Heart right ventricle (tissue), 16 donors: ENCODE measurements at regions of chr1 and their contacts with region 1.

Region 1: GRCh38 chr1:198756470-198756869 is 117.6 kb downstream of the PTPRC start:
- DNase-seq: no peak
- ATAC-seq: no peak
- H3K4me3 ChIP-seq: no peak overlapping the region
- H3K27ac ChIP-seq: no peak overlapping the region
- H3K4me1 ChIP-seq: peaks cover 0 to 7% (median 0%) of the 10 kb centered on the region in 9 donors
- H3K27me3 ChIP-seq: no peaks in the 10 kb centered on the region
- CTCF ChIP-seq: peak in 8 of 9 donors; percentile 29 to 65 (median 46)

Region 2: GRCh38 chr1:198793714-198794113 is 37.2 kb after region 1 on chr1:
- intact Hi-C with region 1: loop called in 1 of 10 experiments (anchors 1 kb)
- DNase-seq: no peak
- ATAC-seq: no peak
- H3K4me3 ChIP-seq: no peak overlapping the region
- H3K27ac ChIP-seq: no peak overlapping the region
- H3K4me1 ChIP-seq: peaks cover 0 to 3% (median 0%) of the 10 kb centered on the region in 9 donors
- H3K27me3 ChIP-seq: no peaks in the 10 kb centered on the region
- CTCF ChIP-seq: no peak

Region 3: GRCh38 chr1:199243423-199244061 is 487.1 kb after region 1 on chr1:
- intact Hi-C with region 1: loop called in 4 of 10 experiments (anchors 5 to 10 kb)
- DNase-seq: peak; percentile 13 to 50
- ATAC-seq: peak in 7 of 8 donors; percentile 34 to 88 (median 69)
- H3K4me3 ChIP-seq: no peak overlapping the region
- H3K27ac ChIP-seq: no peak overlapping the region
- H3K4me1 ChIP-seq: no peaks in the 10 kb centered on the region
- H3K27me3 ChIP-seq: no peaks in the 10 kb centered on the region
- CTCF ChIP-seq: peak in 8 of 9 donors; percentile 36 to 73 (median 64)

Region 4: GRCh38 chr1:199551967-199552565 is 795.6 kb after region 1 on chr1:
- intact Hi-C with region 1: loop called in 4 of 10 experiments (anchors 5 kb)
- DNase-seq: peak in 1 of 2 donors; percentile 37
- ATAC-seq: no peak
- H3K4me3 ChIP-seq: no peak overlapping the region
- H3K27ac ChIP-seq: no peak overlapping the region
- H3K4me1 ChIP-seq: no peaks in the 10 kb centered on the region
- H3K27me3 ChIP-seq: peaks cover 0 to 3% (median 0%) of the 10 kb centered on the region in 7 donors
- CTCF ChIP-seq: peak in 8 of 9 donors; percentile 25 to 80 (median 70)

Region 5: GRCh38 chr1:200302192-200302920 is 1545.9 kb after region 1 on chr1:
- intact Hi-C with region 1: loop called in 1 of 10 experiments (anchors 10 kb)
- DNase-seq: peak; percentile 11 to 13
- ATAC-seq: peak; percentile 66 to 87 (median 74)
- H3K4me3 ChIP-seq: peak overlapping the region; percentile 40 to 83 (median 73)
- H3K27ac ChIP-seq: peak overlapping the region in 5 of 10 donors; percentile 1 to 64 (median 43)
- H3K4me1 ChIP-seq: peaks cover 0 to 19% (median 6%) of the 10 kb centered on the region in 9 donors
- H3K27me3 ChIP-seq: peaks cover 0 to 17% (median 6%) of the 10 kb centered on the region in 7 donors
- CTCF ChIP-seq: peak in 3 of 9 donors; percentile 23 to 29 (median 28)